Psoas muscle (tissue), 8 donors: ENCODE measurements at regions of chr2 and their contacts with region 1.

Region 1: GRCh38 chr2:100381240-100381639 is 36.2 kb downstream of the CHST10 start:
- DNase-seq: peak; percentile 69 to 74
- ATAC-seq: peak; percentile 64 to 85 (median 76)
- H3K4me3 ChIP-seq: no peak overlapping the region
- H3K27ac ChIP-seq: no peak overlapping the region
- H3K4me1 ChIP-seq: no peaks in the 10 kb centered on the region
- H3K27me3 ChIP-seq: peaks cover 0 to 4% (median 0%) of the 10 kb centered on the region in 3 donors
- CTCF ChIP-seq: peak; percentile 89

Region 2: GRCh38 chr2:100262555-100263320 is 118.5 kb before region 1 on chr2:
- intact Hi-C with region 1: loop called (anchors 1 to 2 kb)
- DNase-seq: peak; percentile 69 to 77
- ATAC-seq: peak; percentile 74 to 90 (median 82)
- H3K4me3 ChIP-seq: no peak overlapping the region
- H3K27ac ChIP-seq: no peak overlapping the region
- H3K4me1 ChIP-seq: peaks cover under 1% of the 10 kb centered on the region
- H3K27me3 ChIP-seq: no peaks in the 10 kb centered on the region
- CTCF ChIP-seq: peak; percentile 99

Region 3: GRCh38 chr2:100321181-100321865 is 59.9 kb before region 1 on chr2:
- intact Hi-C with region 1: loop called in 1 of 2 experiments (anchors 5 kb)
- DNase-seq: peak; percentile 41 to 67
- ATAC-seq: peak; percentile 74 to 83 (median 76)
- H3K4me3 ChIP-seq: peak overlapping the region; percentile 75
- H3K27ac ChIP-seq: peak overlapping the region; percentile 90
- H3K4me1 ChIP-seq: peaks cover 9% of the 10 kb centered on the region
- H3K27me3 ChIP-seq: peaks cover 0 to 4% (median 0%) of the 10 kb centered on the region in 3 donors
- CTCF ChIP-seq: peak; percentile 38